ENCODE measurements at regions of chr5 and their contacts with region 1.

Region 1: GRCh38 chr5:64612344-64612961 is 77.8 kb upstream of the SHISAL2B start:
- DNase-seq: peak; percentile 60
- H3K4me3 ChIP-seq: no peak overlapping the region
- H3K27ac ChIP-seq: no peak overlapping the region
- H3K4me1 ChIP-seq: no peaks in the 10 kb centered on the region
- H3K27me3 ChIP-seq: no peaks in the 10 kb centered on the region
- CTCF ChIP-seq: peak; percentile 53 to 70 (median 62)
- EP300 ChIP-seq: no peak
- POLR2A ChIP-seq: no peak

Region 2: DNA sequence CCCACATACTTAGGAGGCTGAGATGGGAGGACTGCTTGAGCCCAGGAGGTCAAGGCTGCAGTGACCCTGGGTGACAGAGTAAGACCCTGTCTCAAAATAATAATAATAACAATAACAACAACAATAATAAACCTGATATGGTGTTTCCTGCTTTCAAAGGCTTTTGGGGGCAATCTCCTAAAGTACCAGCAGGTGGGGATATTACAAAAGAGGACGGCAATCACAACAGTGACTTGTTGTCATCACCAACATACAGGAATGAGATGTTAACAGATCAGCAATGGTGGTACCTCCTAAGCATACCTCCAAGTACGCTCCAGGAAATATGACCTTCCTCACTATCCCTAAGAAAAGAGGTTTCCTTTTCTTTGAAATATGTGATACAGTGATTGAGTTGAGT is 537.9 kb before region 1 on chr5:
- intact Hi-C with region 1: loop called (anchors 5 kb)
- DNase-seq: no peak
- H3K4me3 ChIP-seq: no peak overlapping the region
- H3K27ac ChIP-seq: no peak overlapping the region
- H3K4me1 ChIP-seq: no peaks in the 10 kb centered on the region
- H3K27me3 ChIP-seq: no peaks in the 10 kb centered on the region
- CTCF ChIP-seq: peak; percentile 21 to 60 (median 40)
- EP300 ChIP-seq: no peak
- POLR2A ChIP-seq: no peak

Region 3: GRCh38 chr5:64147849-64148441 is 464.5 kb before region 1 on chr5:
- intact Hi-C with region 1: loop called (anchors 5 kb)
- DNase-seq: peak; percentile 91
- H3K4me3 ChIP-seq: no peak overlapping the region
- H3K27ac ChIP-seq: no peak overlapping the region
- H3K4me1 ChIP-seq: peaks cover 12 to 28% (median 25%) of the 10 kb centered on the region in 4 donors
- H3K27me3 ChIP-seq: no peaks in the 10 kb centered on the region
- CTCF ChIP-seq: peak; percentile 66 to 79 (median 78)
- EP300 ChIP-seq: no peak
- POLR2A ChIP-seq: no peak

Region 4: DNA sequence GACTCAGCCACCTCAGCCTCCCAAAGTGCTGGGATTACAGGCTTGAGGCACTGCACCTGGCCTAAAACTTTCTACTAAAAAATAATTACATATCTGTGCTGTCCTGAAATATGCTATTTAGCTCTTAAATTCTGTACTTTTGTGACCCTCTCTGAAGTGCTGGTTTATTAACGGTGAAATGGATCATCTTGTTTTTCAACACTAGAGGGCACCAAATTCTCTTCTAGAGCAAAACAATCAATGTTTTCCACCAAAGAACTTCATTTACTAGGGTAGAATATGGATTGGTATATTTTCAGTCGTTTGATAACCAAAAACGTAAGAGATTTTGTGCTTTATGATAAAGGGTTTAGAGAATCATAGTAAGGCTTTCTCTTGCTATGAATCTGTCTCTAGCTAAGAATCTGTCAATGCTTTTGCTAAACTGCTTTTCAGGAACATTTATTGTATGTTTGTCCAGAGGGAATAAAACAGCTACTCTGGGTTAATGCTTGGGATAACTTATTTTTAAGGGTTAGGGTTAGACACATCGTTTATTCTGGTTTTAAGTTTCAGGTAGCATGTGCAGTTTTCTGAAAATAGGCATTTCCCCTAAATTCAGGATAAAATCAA is 383.2 kb before region 1 on chr5:
- intact Hi-C with region 1: loop called (anchors 5 kb)
- DNase-seq: no peak
- H3K4me3 ChIP-seq: no peak overlapping the region
- H3K27ac ChIP-seq: no peak overlapping the region
- H3K4me1 ChIP-seq: no peaks in the 10 kb centered on the region
- H3K27me3 ChIP-seq: no peaks in the 10 kb centered on the region
- CTCF ChIP-seq: peak; percentile 36 to 68 (median 50)
- EP300 ChIP-seq: no peak
- POLR2A ChIP-seq: no peak

Measured in esophagus muscularis mucosa (tissue), 4 donors.